Activated CD4-positive, alpha-beta T cell treated with anti-CD3 and anti-CD28 coated beads, Interleukin-2, amount 10 ng/mL, durations not matched to agents 24 days and 14 days (primary cell): ENCODE measurements at regions of chr5 and their contacts with region 1.

Region 1: GRCh38 chr5:177303121-177303924 is at the starts of genes PRELID1 and RAB24:
- DNase-seq: peak; percentile 97
- H3K4me3 Mint-ChIP-seq: peak within 1 kb of the TSS; percentile 98
- H3K27ac Mint-ChIP-seq: peak within 1 kb of the TSS; percentile 88
- H3K4me1 Mint-ChIP-seq: peaks cover 61% of the 10 kb centered on the region
- H3K27me3 Mint-ChIP-seq: no peaks in the 10 kb centered on the region
- total RNA-seq, gene PRELID1: 248 and 257 TPM in 2 replicates
- total RNA-seq, gene RAB24: 18.3 and 22.2 TPM in 2 replicates

Region 2: GRCh38 chr5:177133091-177133852 is 170.1 kb before region 1 on chr5 and contains the start of gene NSD1:
- intact Hi-C with region 1: loop called (anchors 2 kb)
- DNase-seq: peak; percentile 97
- H3K4me3 Mint-ChIP-seq: peak within 1 kb of the TSS; percentile 95
- H3K27ac Mint-ChIP-seq: peak within 1 kb of the TSS; percentile 92
- H3K4me1 Mint-ChIP-seq: peaks cover 46% of the 10 kb centered on the region
- H3K27me3 Mint-ChIP-seq: no peaks in the 10 kb centered on the region
- total RNA-seq, gene NSD1: 103 and 108 TPM in 2 replicates